Adrenal gland (tissue), 19 donors: ENCODE measurements at regions of chr17 and their contacts with region 1.

Region 1: DNA sequence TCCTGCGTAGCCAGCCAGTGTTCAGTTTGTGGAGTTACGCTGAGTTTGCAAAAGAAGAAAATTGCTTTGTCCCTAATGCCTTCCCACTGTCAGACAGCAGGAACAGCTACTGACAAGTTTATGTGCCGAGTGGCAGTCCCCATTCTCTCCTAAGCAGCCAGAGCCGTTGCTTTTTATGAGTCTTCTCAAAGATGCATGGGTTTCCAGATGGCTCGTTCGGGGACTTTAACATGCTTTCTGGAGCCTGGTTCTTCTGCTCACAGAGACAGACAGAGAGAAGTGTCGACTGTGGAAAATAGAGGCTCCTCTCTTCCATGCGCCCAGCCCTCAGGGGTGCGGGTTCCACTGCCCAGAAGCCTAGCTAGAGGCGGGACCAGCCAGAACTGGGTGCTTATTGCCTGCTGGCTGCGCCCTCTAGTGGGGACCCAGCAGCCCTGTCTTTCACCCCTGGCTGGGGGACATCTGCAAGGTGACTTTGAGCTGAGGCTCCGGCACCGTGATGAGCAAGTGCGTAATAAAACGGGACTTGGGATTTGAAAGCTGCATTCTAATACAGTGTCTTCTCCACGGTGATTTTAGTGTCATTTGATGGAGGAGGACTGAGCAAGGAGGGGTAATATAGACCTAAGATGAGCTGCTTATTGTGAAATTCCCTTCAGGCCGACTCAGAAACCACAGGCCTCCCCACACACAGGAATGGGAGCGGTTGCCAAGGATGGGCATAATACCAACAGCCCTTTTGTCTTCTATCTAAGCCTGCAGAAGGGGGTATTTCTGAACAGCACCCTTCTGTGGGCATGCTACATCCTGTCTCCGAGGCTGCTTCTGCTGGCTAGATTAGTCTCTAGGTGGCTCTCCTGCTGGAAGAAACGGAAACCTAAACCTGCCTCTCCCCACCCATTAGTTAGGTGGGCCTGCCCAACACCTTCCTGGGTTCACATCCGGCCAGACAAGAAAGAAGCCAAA is 73.1 kb downstream of the CCDC182 start:
- DNase-seq: peak; percentile 78 to 91 (median 84)
- H3K4me3 ChIP-seq: no peak overlapping the region
- H3K27ac ChIP-seq: peak overlapping the region in 2 of 5 donors; percentile 36 to 60
- H3K4me1 ChIP-seq: peaks cover 8 to 17% of the 10 kb centered on the region in 2 donors
- H3K27me3 ChIP-seq: no peaks in the 10 kb centered on the region
- CTCF ChIP-seq: peak; percentile 84 to 96 (median 94)
- POLR2A ChIP-seq: no peak

Region 2: DNA sequence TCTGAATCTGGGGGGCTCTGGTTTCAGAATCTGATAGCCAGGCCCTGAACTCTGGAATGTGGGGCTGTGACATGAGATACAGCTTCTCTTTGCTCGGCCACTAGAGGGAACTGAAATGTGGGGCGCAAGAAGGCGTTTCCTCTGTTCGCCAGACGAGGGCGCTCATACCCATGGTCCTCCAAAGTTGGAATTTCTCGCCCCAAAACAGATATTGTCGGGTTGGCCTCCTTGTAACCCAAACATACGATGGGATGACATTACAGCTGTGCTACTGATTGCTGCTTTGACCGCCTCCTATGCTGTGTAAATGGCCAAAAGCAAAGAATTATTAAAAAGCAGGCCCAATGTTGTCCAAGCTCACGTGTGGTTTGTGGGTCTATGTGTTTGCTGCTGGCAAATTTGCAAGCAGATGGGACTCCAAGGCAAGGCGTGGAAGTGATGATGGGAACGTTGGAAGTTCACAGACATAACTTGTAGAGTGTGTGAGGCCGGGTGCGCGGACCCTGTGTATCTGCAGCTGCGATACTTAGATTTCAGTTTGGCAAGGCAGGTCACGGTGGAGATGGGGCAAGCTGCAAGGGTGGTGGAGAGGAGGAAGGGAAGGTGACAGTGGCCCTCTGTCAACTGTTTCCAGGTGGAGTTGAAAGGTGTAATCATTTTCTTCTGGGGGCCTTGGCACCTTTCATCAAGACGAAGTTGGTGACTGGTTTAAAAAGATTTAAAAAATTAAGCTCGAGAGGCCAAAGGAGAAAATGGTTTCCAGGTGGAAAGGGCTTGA is 428.6 kb before region 1 on chr17:
- intact Hi-C with region 1: loop called in 1 of 2 experiments (anchors 10 kb)
- DNase-seq: peak; percentile 56 to 87 (median 77)
- H3K4me3 ChIP-seq: no peak overlapping the region
- H3K27ac ChIP-seq: no peak overlapping the region
- H3K4me1 ChIP-seq: no peaks in the 10 kb centered on the region
- H3K27me3 ChIP-seq: no peaks in the 10 kb centered on the region
- CTCF ChIP-seq: peak; percentile 98 to 100 (median 99)
- POLR2A ChIP-seq: no peak

Region 3: DNA sequence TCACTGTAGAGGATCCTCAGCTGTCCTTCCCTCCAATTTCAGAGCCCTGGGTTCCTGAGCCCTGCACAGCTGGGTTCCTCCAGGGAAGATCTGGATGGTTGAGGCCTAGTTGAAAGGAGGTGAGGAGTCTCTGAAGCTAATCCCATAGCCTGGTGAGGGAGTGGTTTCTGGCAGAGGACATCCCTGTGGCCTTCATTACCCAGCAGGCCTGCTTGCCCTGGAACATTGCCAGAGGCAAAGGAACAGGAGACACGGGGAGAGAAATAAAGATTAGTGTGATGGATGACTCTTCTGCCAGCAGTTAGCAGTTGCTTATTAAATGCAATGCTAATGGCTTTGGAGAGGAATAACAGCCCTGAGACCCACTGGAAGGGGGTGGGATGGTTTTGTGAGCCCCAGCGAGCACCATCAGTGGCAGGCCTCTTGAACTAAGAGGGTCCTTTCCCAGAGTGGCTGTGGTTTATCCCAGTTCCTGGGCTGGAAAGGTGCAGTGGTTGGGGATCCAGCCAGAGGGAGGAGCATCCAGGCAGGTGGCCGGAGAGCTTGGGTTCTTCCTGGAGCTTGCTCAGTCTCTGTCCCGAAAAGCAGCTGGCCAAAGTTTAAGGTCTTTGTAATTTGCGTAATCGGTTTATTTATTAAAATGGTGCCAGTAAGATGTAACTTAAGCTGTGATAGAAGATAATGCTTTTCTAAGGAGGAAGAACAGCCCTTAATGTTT is 136.5 kb before region 1 on chr17:
- intact Hi-C with region 1: no loop called
- DNase-seq: peak; percentile 80 to 94 (median 92)
- H3K4me3 ChIP-seq: no peak overlapping the region
- H3K27ac ChIP-seq: peak overlapping the region; percentile 6 to 93 (median 61)
- H3K4me1 ChIP-seq: peaks cover 38 to 66% of the 10 kb centered on the region in 2 donors
- H3K27me3 ChIP-seq: no peaks in the 10 kb centered on the region
- CTCF ChIP-seq: no peak
- POLR2A ChIP-seq: peak in 1 of 2 donors; percentile 22

Region 4: DNA sequence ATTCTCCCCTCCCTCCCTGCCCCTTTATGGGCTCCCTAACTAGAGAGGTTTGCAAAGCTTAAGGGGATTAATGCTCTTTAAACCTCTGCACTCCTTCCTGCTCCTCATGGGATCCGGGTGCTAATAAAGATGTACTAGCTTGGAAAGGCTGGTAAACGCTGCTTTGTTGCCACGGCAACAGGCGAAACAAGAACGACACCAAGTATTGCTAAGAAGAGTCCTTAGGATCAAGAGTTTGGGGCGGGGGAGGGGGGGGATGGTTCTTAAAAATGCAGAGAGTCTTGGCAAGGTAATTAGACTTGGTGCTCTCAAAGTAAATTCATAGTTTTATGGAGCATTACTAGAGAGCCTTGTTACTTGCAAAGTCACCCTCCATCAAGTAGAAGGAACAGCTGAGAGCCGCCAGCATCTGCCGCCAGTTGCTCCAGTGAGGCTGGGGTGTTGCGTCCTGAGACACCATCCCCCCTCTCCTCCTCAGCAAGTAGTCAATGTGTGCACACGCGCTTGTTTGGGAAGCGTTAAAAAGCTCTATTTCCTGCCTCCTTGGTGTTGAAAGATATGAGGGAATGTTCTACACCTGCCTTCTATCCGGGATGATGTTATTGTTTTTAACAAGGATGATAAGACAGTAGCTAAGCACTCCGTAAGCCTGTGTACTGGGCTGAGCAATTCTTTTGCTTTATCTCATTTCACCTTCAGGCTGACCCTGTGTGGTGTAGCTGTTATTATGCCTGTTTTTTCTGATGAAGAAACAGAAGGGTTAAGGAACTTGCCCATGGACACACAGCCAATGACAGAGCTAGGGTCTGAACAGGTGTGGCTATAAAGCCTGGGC is 117.7 kb before region 1 on chr17:
- intact Hi-C with region 1: no loop called
- DNase-seq: peak in 1 of 7 donors; percentile 44
- H3K4me3 ChIP-seq: no peak overlapping the region
- H3K27ac ChIP-seq: peak overlapping the region in 4 of 5 donors; percentile 25 to 74 (median 60)
- H3K4me1 ChIP-seq: peaks cover 27 to 47% of the 10 kb centered on the region in 2 donors
- H3K27me3 ChIP-seq: no peaks in the 10 kb centered on the region
- CTCF ChIP-seq: no peak
- POLR2A ChIP-seq: no peak

Region 5: GRCh38 chr17:57604771-57605674 is 66.9 kb before region 1 on chr17:
- intact Hi-C with region 1: loop called in 1 of 2 experiments (anchors 5 kb)
- DNase-seq: peak in 6 of 7 donors; percentile 32 to 88 (median 47)
- H3K4me3 ChIP-seq: no peak overlapping the region
- H3K27ac ChIP-seq: peak overlapping the region; percentile 31 to 77 (median 57)
- H3K4me1 ChIP-seq: peaks cover 28 to 61% of the 10 kb centered on the region in 2 donors
- H3K27me3 ChIP-seq: no peaks in the 10 kb centered on the region
- CTCF ChIP-seq: no peak
- POLR2A ChIP-seq: no peak

Region 6: DNA sequence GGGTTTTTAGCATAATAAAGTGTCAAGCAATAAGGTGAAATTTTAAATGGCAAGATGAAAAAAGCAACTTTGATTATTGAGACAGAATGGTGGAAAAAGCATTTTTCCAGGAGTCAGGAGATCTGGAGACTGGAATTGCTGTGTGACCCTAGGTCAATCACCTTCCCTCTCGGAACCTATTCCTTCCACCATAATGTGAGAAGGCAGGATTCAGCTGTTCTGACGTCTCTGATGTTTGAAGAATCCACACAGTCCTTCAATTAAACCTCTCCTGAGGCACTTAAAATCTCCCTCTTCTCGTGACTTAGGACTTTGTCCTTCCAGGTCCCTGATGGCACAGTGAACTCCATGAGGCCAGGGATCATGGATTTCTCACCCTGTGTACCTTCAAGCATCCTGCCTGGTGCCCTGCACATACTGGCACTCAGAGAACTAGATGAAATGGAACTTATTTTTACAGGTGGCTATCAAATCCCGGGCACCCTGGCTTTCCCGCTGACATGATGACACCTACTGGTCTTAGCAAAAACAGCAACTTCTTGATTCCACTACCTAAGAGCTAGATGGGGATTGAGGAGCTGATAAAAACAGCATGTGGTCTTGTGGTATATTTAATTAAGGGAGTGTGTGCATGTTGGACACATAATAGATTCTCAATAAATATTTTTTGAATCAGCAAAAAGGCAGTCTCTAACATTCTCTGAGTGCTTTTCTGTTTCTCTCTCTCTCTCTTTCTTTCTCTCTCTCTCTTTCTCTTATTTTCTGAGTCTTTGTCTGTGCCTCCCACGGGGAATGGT is 75.5 kb after region 1 on chr17:
- intact Hi-C with region 1: loop called in 1 of 2 experiments (anchors 10 kb)
- DNase-seq: peak; percentile 39 to 80 (median 60)
- H3K4me3 ChIP-seq: no peak overlapping the region
- H3K27ac ChIP-seq: no peak overlapping the region
- H3K4me1 ChIP-seq: peaks cover 0 to 14% of the 10 kb centered on the region in 2 donors
- H3K27me3 ChIP-seq: no peaks in the 10 kb centered on the region
- CTCF ChIP-seq: peak; percentile 49 to 80 (median 74)
- POLR2A ChIP-seq: no peak

Region 7: DNA sequence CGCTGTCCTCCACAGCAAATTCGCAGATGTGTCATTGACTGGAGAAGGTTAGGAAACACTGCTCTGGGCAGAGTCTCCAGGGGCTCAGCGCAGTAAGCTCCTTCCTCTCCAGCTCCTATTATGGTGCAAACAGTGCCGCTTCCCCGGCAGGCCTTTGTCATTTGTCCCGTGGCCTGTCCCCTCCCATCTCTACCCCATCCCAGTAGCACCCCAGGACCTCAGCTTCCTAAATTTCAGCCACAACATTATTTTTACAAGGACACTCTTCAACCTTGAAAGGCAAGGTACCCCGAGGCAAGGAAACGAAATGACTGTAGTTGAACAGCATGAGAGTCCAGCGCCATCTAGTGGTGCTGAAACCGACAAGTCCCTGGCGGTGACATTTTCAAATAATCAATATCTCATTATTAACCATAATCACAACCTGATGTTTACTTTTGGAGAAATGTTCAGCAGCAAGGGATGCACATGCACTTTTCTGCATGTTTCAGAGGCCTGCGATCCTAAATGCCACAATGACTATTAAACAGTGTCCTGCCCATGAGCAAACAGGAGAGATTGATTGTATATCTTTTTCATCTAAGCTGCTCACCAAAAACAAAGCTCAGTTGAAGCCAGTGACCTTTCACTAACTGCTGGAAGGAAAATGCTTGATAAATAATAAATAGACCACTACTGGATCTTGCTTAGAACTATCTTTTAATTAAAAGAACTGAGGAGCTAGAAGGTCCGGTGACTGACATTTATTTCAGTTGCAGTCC is 161.4 kb after region 1 on chr17:
- intact Hi-C with region 1: loop called in 1 of 2 experiments (anchors 10 kb)
- DNase-seq: peak; percentile 76 to 91 (median 83)
- H3K4me3 ChIP-seq: peak overlapping the region in 3 of 4 donors; percentile 17 to 53 (median 38)
- H3K27ac ChIP-seq: peak overlapping the region; percentile 54 to 93 (median 80)
- H3K4me1 ChIP-seq: peaks cover 24 to 40% of the 10 kb centered on the region in 2 donors
- H3K27me3 ChIP-seq: no peaks in the 10 kb centered on the region
- CTCF ChIP-seq: peak; percentile 89 to 97 (median 94)
- POLR2A ChIP-seq: peak in 1 of 2 donors; percentile 76